ENCODE measurements at regions of chr7 and their contacts with region 1.

Region 1: DNA sequence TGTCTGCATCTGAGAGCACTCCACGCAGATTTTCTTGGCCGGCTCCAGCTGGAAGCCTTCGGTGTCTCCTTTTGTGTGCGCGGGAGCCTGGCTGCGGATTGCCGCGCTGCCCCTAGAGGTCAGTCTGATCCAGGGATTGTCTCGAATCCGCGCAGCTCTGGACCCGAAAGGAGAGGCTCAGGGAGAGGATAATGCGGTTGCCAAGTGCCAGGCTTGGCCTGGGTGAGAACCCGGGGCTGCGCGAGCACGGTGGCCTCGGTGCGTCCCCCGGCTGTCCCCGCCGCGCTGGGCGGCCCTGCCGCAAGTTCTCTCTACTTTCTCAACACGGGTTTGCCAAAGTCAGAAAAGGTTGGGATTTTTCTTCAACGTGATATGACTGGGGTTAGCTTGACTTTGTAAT is 140.9 kb downstream of the ADCYAP1R1 start:
- DNase-seq: peak; percentile 89
- H3K4me3 ChIP-seq: peak overlapping the region in 1 of 2 experiments; percentile 33; a peak in 2 of 4 replicates
- H3K27ac ChIP-seq: no peak overlapping the region
- H3K4me1 ChIP-seq: peaks cover 0 to 2% of the 10 kb centered on the region in 2 experiments; a peak in 1 of 4 replicates
- H3K27me3 ChIP-seq: peaks cover 5% of the 10 kb centered on the region; the same call in 1 of the 2 replicates
- CTCF ChIP-seq: peak; percentile 83
- EP300 ChIP-seq: no peak
- RAD21 ChIP-seq: peak; percentile 86

Region 2: DNA sequence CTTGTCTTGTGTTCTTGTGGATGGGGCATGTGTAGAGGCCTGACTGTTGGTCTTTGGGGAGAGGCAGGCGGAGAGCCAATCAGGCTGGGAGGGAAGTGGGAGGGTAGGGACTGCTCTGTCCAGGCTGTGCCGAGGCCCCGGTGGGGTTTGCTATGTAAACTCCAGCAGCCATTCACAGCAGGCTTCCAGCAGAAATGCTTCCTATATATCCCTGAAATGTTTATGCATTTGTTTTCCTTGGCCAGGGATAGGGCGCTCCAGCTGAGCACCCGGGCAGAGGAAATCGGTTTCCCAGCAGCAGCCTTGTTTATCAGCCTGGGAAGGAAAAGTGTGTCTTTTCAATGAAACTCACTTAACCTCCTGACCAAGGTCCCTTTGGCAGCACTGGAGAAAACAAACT is 299.6 kb before region 1 on chr7:
- CTCF ChIA-PET with region 1: no interaction called
- POLR2A ChIA-PET with region 1: no interaction called
- DNase-seq: peak; percentile 27
- H3K4me3 ChIP-seq: no peak overlapping the region
- H3K27ac ChIP-seq: no peak overlapping the region
- H3K4me1 ChIP-seq: peaks cover 7 to 20% of the 10 kb centered on the region in 2 experiments; a peak in 2 of 4 replicates
- H3K27me3 ChIP-seq: no peaks in the 10 kb centered on the region
- CTCF ChIP-seq: no peak
- EP300 ChIP-seq: no peak
- RAD21 ChIP-seq: no peak

Region 3: DNA sequence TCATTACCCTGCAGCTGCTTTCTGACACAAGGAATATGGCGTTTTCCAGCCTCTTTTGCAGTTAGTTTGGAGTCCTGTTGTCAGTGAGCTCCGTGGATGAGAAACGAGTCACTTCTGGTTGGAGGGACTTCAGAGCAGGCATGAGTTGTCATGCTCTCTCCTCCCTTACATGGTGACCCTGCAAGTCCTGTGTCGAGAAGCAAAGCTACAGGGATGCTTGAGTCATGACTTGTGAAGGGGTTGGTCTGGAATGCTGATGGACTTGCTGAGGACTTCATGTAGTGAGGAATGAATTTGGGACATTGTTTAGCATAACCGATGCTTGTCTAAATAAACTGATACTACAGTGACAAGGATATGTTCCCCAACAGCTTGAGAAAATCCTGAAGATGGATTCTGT is 32.0 kb before region 1 on chr7:
- CTCF ChIA-PET with region 1: interaction called, 10 read pairs
- POLR2A ChIA-PET with region 1: no interaction called
- DNase-seq: no peak
- H3K4me3 ChIP-seq: no peak overlapping the region
- H3K27ac ChIP-seq: no peak overlapping the region
- H3K4me1 ChIP-seq: no peaks in the 10 kb centered on the region
- H3K27me3 ChIP-seq: 0 out of 2 replicates have a peak, but pooled peaks cover 4% of the 10 kb centered on the region
- CTCF ChIP-seq: no peak
- EP300 ChIP-seq: no peak
- RAD21 ChIP-seq: no peak

Region 4: GRCh38 chr7:31204071-31204470 is 11.1 kb after region 1 on chr7:
- CTCF ChIA-PET with region 1: interaction called, 24 read pairs
- POLR2A ChIA-PET with region 1: no interaction called
- DNase-seq: no peak
- H3K4me3 ChIP-seq: no peak overlapping the region
- H3K27ac ChIP-seq: no peak overlapping the region
- H3K4me1 ChIP-seq: no peaks in the 10 kb centered on the region; a peak in 1 of 4 replicates
- H3K27me3 ChIP-seq: 0 out of 2 replicates have a peak, but pooled peaks cover 5% of the 10 kb centered on the region
- CTCF ChIP-seq: no peak
- EP300 ChIP-seq: no peak
- RAD21 ChIP-seq: no peak

Region 5: DNA sequence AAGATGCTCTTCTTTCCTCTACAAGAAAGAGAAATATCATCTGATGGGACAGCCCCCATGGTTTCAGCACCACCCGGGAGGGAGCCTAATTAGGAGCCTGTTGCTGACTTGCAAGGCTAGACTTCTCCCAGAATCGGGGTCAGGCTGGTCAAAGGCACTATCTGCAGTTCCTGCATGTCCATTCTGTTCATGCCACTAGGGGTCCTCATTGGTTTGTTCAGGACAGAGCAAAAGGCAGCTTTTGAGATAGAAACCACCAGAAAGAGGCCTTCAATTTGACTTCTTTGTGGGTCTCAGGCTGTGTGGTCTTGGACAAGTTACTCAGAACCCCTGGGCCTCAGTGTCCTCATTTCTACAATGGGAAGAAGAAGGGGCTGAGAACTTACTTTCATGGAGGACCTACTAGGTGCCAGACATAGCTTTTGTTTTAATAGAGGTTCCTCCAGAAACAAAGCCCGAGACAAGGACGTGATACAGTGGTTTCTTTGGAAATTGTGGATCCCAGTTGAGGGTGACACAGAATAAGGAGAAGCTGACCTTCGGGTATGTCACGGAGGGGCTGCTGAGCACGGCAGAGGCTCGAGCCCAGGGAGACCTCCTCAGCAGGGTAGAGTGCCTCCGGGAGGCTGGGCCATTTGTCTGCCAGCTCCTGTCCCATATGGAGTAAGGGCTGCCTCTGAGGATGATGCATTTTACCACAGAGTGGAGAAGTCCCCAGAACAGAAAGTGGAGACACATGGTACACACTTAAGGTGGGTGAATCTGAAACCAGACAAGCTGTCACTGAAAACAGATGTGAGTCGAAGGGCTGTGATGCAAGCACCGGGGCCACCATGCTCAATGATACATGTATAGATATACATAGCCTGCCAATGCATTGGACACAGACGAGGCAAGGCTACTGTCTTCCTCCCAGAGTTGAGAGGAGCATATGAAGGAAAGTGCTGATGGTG is 180.6 kb after region 1 on chr7:
- CTCF ChIA-PET with region 1: interaction called, 10 read pairs
- POLR2A ChIA-PET with region 1: interaction called, 3 read pairs
- DNase-seq: peak; percentile 52
- H3K4me3 ChIP-seq: peak overlapping the region in 1 of 2 experiments; percentile 7; a peak in 1 of 4 replicates
- H3K27ac ChIP-seq: no peak overlapping the region
- H3K4me1 ChIP-seq: no peaks in the 10 kb centered on the region; a peak in 1 of 4 replicates
- H3K27me3 ChIP-seq: peaks cover 56% of the 10 kb centered on the region
- CTCF ChIP-seq: peak; percentile 77
- EP300 ChIP-seq: no peak
- RAD21 ChIP-seq: peak; percentile 65

Region 6: GRCh38 chr7:31864646-31865045 is 671.7 kb after region 1 on chr7:
- CTCF ChIA-PET with region 1: no interaction called
- POLR2A ChIA-PET with region 1: no interaction called
- DNase-seq: no peak
- H3K4me3 ChIP-seq: no peak overlapping the region
- H3K27ac ChIP-seq: no peak overlapping the region
- H3K4me1 ChIP-seq: no peaks in the 10 kb centered on the region; a peak in 1 of 4 replicates
- H3K27me3 ChIP-seq: no peaks in the 10 kb centered on the region
- CTCF ChIP-seq: no peak
- EP300 ChIP-seq: no peak
- RAD21 ChIP-seq: no peak

Measured in SK-N-SH (cell line).